Left ventricle myocardium inferior (tissue), 1 donor: ENCODE measurements at regions of chr9 and their contacts with region 1.

Region 1: GRCh38 chr9:35903049-35903448 is 3.0 kb upstream of the HRCT1 start:
- DNase-seq: no peak
- H3K4me3 ChIP-seq: no peak overlapping the region
- H3K27ac ChIP-seq: no peak overlapping the region
- H3K4me1 ChIP-seq: peaks cover 51% of the 10 kb centered on the region
- H3K27me3 ChIP-seq: no peaks in the 10 kb centered on the region
- CTCF ChIP-seq: peak; percentile 84

Region 2: GRCh38 chr9:35945341-35946018 is 42.4 kb after region 1 on chr9:
- intact Hi-C with region 1: loop called (anchors 5 kb)
- DNase-seq: peak; percentile 85
- H3K4me3 ChIP-seq: peak overlapping the region; percentile 43
- H3K27ac ChIP-seq: peak overlapping the region; percentile 79
- H3K4me1 ChIP-seq: peaks cover 47% of the 10 kb centered on the region
- H3K27me3 ChIP-seq: no peaks in the 10 kb centered on the region
- CTCF ChIP-seq: peak; percentile 90

Region 3: GRCh38 chr9:36023260-36024048 is 120.4 kb after region 1 on chr9:
- intact Hi-C with region 1: loop called (anchors 10 kb)
- DNase-seq: peak; percentile 39
- H3K4me3 ChIP-seq: no peak overlapping the region
- H3K27ac ChIP-seq: no peak overlapping the region
- H3K4me1 ChIP-seq: peaks cover 10% of the 10 kb centered on the region
- H3K27me3 ChIP-seq: no peaks in the 10 kb centered on the region
- CTCF ChIP-seq: peak; percentile 86